Ascending aorta (tissue), 2 donors: ENCODE measurements at regions of chr7 and their contacts with region 1.

Region 1: GRCh38 chr7:149261829-149262617 is at the start of gene ZNF783:
- DNase-seq: peak; percentile 44 to 93
- H3K4me3 ChIP-seq: peak within 1 kb of the TSS; percentile 72 to 91
- H3K27ac ChIP-seq: peak within 1 kb of the TSS; percentile 86 to 95
- H3K4me1 ChIP-seq: peaks cover 3 to 12% of the 10 kb centered on the region in 2 donors
- H3K27me3 ChIP-seq: no peaks in the 10 kb centered on the region
- CTCF ChIP-seq: peak; percentile 49 to 93 (median 67)
- total RNA-seq, gene ZNF783: 25.7 TPM

Region 2: DNA sequence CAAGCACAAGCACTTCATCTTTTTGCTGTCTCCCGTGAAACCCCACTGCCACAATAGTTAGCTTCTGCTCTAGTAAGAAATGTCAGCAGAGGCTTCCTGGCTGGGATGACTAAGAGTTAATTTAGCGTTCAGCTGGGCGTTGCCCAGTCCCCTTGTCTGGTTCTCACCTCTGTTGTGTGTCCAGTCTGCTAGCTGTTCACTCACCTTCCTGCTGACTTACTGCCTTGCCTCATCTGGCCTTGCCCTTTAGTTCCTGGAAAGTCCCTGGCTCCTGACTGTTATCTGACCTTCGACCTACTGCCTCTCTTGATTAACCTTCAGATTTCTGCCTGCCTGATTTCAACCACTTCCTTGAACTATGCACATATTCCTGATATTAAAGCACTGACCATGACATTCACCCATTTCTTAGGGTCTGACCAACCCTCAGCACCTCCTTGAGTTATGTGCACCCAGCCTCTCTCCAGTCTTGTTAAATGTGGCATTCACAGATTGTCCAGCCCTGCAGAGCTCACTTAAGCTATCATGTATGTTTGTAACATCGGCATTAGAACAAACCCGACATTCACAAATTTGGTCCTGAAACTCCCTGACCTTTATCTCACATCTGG is 641.2 kb before region 1 on chr7:
- intact Hi-C with region 1: no loop called
- DNase-seq: no peak
- H3K4me3 ChIP-seq: no peak overlapping the region
- H3K27ac ChIP-seq: no peak overlapping the region
- H3K4me1 ChIP-seq: no peaks in the 10 kb centered on the region
- H3K27me3 ChIP-seq: no peaks in the 10 kb centered on the region
- CTCF ChIP-seq: no peak

Region 3: DNA sequence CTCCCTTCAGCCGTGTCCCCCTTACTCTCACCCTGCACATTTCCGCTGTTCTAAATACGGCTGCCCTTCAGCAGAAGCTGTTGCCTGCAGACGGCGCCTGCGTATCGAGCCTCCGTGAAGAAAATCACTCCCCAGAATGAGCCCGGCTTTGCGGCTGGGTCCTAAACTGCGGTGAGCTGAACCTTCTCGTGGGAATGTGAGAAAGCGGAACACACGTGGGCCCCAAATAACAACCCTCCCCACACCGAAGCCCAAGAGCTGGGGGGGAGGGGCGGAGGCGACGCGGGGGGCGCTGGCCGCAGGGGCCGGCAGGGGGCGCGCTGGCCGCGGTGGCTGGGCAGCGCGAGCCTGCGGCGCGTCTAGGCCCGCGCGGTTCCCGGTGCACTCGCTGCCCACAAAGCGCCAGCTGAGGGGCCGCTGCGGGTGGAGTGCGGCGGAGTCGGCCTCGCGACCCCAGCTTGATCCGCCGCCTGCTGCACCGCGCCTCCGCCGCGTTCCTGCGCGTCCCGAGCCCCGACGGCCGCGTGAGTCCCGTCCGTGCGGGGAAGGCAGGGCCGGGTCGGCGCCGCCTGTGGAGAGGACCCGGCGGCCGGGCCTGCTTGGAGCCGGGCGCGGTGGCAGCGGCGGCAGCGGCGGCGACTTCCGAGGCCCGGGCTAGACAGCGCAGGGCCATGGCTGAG is 114.8 kb before region 1 on chr7 and contains the start of gene ZNF398:
- intact Hi-C with region 1: loop called (anchors 5 kb)
- DNase-seq: peak in 1 of 2 donors; percentile 85
- H3K4me3 ChIP-seq: peak within 1 kb of the TSS; percentile 90 to 96
- H3K27ac ChIP-seq: peak within 1 kb of the TSS; percentile 80 to 92
- H3K4me1 ChIP-seq: peaks cover 0 to 14% of the 10 kb centered on the region in 2 donors
- H3K27me3 ChIP-seq: no peaks in the 10 kb centered on the region
- CTCF ChIP-seq: peak; percentile 48 to 77 (median 49)
- total RNA-seq, gene ZNF398: 19.6 TPM

Region 4: DNA sequence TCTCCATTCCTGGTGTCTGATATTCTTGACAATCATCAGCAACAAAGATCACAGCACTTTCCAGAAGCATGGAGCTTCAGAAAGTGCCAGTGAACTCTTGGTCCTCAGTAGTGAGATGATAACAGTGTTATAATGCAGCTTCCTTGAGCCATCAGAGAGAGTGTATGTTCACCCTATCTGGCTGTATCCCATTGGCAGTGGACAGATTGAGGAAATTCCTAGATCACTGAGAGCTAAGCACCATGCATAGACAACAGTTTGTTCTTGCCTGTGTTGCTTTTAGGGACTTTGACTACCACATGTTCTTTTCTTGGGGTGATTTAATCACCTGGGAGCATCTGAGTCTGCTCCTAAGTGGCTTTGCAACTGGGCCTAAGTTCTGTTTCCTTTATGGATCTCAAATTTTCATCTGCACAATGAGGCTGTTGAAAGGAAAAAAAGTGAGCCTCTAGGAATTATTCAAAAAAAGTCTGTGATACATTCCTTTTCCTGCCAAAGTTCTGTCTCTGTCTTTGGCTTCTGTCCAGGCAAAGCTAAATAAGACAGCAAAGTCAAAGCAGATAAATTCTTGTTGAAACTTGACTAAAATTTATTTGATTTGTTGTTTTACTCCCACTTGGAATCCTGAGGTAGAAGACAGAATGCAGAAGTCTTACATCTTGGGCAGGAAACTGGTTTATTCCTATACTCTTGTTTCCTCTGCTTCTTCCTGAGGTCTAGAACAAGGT is 81.1 kb before region 1 on chr7:
- intact Hi-C with region 1: no loop called
- DNase-seq: no peak
- H3K4me3 ChIP-seq: no peak overlapping the region
- H3K27ac ChIP-seq: no peak overlapping the region
- H3K4me1 ChIP-seq: no peaks in the 10 kb centered on the region
- H3K27me3 ChIP-seq: no peaks in the 10 kb centered on the region
- CTCF ChIP-seq: no peak

Region 5: GRCh38 chr7:149284850-149285626 is 23.0 kb after region 1 on chr7:
- intact Hi-C with region 1: loop called (anchors 1 kb)
- DNase-seq: peak; percentile 79 to 96
- H3K4me3 ChIP-seq: peak overlapping the region; percentile 66 to 88
- H3K27ac ChIP-seq: peak overlapping the region; percentile 20 to 48
- H3K4me1 ChIP-seq: peaks cover 3 to 14% of the 10 kb centered on the region in 2 donors
- H3K27me3 ChIP-seq: no peaks in the 10 kb centered on the region
- CTCF ChIP-seq: no peak

Region 6: GRCh38 chr7:149381245-149381644 is 119.2 kb after region 1 on chr7:
- intact Hi-C with region 1: no loop called
- DNase-seq: no peak
- H3K4me3 ChIP-seq: no peak overlapping the region
- H3K27ac ChIP-seq: no peak overlapping the region
- H3K4me1 ChIP-seq: no peaks in the 10 kb centered on the region
- H3K27me3 ChIP-seq: no peaks in the 10 kb centered on the region
- CTCF ChIP-seq: no peak

Region 7: DNA sequence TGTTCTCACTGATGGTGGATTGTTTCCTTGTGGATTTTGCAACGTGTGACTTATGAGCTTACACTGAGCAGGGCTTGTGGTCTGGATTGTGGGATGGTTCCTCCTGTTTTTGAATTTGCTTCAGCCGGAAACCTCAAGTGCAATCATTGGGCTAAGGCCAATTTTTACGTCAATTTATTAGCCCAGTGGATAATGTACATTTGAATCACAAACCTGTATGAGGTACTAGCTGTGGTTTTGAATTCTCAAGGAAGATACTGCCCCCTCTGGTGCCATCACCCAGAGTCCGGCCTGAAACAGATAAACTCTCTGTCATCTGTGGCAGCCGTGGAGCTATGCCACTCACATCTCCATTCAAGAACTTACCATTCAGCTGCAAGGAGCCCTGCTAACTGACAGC is 206.2 kb after region 1 on chr7:
- intact Hi-C with region 1: no loop called
- DNase-seq: no peak
- H3K4me3 ChIP-seq: no peak overlapping the region
- H3K27ac ChIP-seq: no peak overlapping the region
- H3K4me1 ChIP-seq: no peaks in the 10 kb centered on the region
- H3K27me3 ChIP-seq: no peaks in the 10 kb centered on the region
- CTCF ChIP-seq: no peak

Region 8: DNA sequence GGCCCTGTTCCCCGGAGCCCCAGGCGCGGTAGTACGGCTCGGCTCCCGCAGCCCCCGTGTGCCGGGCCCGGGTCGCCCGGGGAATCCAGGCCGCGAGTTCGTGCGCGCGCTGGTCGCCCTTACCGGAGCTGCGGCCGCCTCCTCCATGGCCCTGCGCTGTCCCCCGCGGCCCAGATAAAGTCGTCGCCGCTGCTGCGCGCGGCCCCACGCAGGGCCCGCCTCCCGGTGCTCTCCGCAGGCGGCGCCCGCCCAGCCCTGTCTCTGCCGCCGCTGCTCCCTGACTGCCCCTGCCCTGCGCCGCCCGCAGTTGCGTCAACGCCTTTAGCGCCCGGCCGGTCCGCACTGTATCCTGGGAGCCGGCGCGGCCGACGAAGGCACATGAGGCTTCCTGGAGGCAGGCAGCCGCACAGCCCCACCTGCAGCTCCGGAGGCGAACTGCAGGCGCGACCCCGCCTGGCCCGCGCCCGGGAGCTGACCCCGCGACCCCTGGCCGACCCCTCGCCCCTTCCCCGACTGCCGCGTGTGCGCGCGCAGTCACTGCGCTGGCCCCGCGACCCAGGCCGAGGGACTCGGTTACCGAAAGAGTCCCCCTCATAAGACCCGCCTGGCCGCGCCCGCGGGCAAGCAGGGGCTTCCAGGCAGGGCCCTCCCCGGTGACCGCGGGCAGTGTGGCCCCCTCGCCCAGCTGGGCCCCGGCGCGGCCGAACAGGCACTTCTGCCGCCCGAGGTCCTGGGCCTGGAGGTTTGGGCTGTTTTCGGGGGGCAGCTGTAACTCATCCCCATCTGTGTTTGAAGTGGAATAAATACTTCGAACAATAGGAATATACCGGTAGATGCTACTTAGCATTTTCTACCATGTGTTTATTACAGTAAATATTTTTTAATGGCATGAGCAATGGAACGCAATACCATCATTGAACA is 362.7 kb after region 1 on chr7:
- intact Hi-C with region 1: loop called (anchors 10 kb)
- DNase-seq: peak; percentile 77 to 97
- H3K4me3 ChIP-seq: peak overlapping the region; percentile 91 to 98
- H3K27ac ChIP-seq: peak overlapping the region; percentile 84 to 90
- H3K4me1 ChIP-seq: peaks cover 0 to 7% of the 10 kb centered on the region in 2 donors
- H3K27me3 ChIP-seq: no peaks in the 10 kb centered on the region
- CTCF ChIP-seq: peak; percentile 92 to 98 (median 93)

Region 9: DNA sequence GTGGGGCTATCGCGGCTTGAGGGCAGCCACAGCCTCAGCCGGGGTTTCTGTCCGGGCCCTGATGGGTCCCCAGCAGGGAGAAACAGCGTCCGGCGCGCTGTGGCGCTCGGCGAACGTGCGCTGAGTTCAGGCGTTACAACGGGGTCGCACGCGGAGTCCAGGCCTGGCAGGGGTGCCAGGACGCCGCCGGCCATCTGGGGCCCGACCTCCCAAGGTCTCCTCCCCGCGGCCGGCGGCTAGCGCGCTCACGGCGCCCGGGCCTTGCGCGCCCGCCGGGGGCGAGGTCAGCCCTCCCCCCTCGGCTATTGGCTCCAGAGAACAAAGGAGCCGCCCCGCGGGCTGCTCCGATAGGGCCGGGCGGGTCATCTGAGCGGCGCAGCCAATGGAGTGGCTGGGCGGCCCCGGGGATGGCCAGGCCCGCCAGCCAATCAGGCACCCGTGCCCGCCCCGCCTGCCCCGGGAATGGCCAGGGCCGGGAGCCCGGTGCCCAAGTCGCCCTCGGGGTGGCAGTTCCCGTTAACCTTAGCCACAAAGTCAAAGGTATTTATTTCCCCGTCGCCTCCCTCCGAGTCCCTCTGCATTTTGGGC is 1116.9 kb after region 1 on chr7 and contains the start of gene ZNF775:
- intact Hi-C with region 1: loop called (anchors 10 kb)
- DNase-seq: peak; percentile 88 to 98
- H3K4me3 ChIP-seq: peak within 1 kb of the TSS; percentile 61 to 93
- H3K27ac ChIP-seq: peak within 1 kb of the TSS; percentile 79 to 85
- H3K4me1 ChIP-seq: peaks cover 0 to 6% of the 10 kb centered on the region in 2 donors
- H3K27me3 ChIP-seq: no peaks in the 10 kb centered on the region
- CTCF ChIP-seq: no peak
- total RNA-seq, gene ZNF775: 17.1 TPM